OCI-LY7 (cell line): ENCODE measurements at regions of chrX and their contacts with region 1.

Region 1: GRCh38 chrX:101348452-101349192 is at the start of gene TIMM8A:
- DNase-seq: peak; percentile 84
- H3K4me3 ChIP-seq: peak within 1 kb of the TSS; percentile 99
- H3K27ac ChIP-seq: peak within 1 kb of the TSS; percentile 59
- H3K4me1 ChIP-seq: peaks cover 24% of the 10 kb centered on the region
- CTCF ChIP-seq: no peak
- total RNA-seq, gene TIMM8A: 11.0 and 14.9 TPM in 2 replicates

Region 2: DNA sequence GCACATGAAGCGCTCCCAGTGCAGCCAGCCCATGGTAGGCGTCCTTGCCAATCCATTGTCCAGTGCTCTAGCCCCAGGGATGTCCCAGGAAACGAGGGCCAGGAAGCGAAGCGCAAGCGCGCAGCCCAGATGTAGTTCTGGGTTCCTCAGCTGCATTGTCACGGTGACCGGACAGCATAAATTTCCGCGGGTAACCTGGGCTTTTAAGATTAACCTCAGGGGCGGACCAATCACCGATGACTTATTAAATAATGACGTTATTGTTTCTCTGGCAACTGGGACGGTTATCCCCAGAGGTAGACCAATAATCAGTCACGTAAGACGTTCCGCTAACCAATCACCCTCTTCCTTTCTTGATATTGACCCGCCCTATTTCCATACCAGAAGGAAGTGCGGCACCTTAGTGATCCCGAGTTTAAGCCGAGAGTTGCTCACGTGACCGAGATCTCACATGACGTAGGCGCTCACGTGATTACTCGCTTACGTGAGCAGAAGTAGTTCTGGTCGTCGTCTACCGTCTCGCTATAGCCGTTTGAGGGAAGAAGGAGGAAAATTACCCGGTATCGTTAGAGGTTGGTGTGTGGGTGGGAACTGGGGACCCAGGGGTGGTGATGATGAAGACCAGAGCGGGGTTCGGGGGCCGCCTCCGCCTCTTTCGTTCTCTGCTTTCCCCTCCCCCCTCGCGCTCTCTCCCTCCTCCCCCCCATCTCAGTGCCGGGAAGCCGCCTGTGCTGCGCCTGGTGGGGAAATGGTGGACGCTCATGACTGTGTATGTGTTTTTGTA is 59.3 kb after region 1 on chrX and contains the starts of genes GLA and HNRNPH2:
- CTCF ChIA-PET with region 1: no interaction called
- POLR2A ChIA-PET with region 1: no interaction called
- intact Hi-C with region 1: loop called (anchors 5 kb)
- DNase-seq: peak; percentile 96
- H3K4me3 ChIP-seq: peak within 1 kb of the TSS; percentile 97
- H3K27ac ChIP-seq: peak within 1 kb of the TSS; percentile 85
- H3K4me1 ChIP-seq: peaks cover 5% of the 10 kb centered on the region
- CTCF ChIP-seq: no peak
- total RNA-seq, gene GLA: 47.6 and 51.1 TPM in 2 replicates
- total RNA-seq, gene HNRNPH2: 23.5 and 29.3 TPM in 2 replicates